ENCODE measurements at regions of chr16 and their contacts with region 1.

Region 1: GRCh38 chr16:15949210-15950160 is at the start of gene ABCC1:
- H3K4me3 Mint-ChIP-seq: peak within 1 kb of the TSS; percentile 94
- H3K27ac Mint-ChIP-seq: peak within 1 kb of the TSS; percentile 84
- H3K4me1 Mint-ChIP-seq: peaks cover 43% of the 10 kb centered on the region
- H3K27me3 Mint-ChIP-seq: no peaks in the 10 kb centered on the region

Region 2: GRCh38 chr16:15888072-15888976 is 61.2 kb before region 1 on chr16 and contains the start of gene CEP20:
- intact Hi-C with region 1: loop called (anchors 5 kb)
- H3K4me3 Mint-ChIP-seq: peak within 1 kb of the TSS; percentile 98
- H3K27ac Mint-ChIP-seq: peak within 1 kb of the TSS; percentile 94
- H3K4me1 Mint-ChIP-seq: peaks cover 22% of the 10 kb centered on the region
- H3K27me3 Mint-ChIP-seq: no peaks in the 10 kb centered on the region

Region 3: GRCh38 chr16:15988268-15989013 is 39.0 kb after region 1 on chr16:
- intact Hi-C with region 1: loop called (anchors 5 kb)
- H3K4me3 Mint-ChIP-seq: no peak overlapping the region
- H3K27ac Mint-ChIP-seq: peak overlapping the region; percentile 48
- H3K4me1 Mint-ChIP-seq: peaks cover 49% of the 10 kb centered on the region
- H3K27me3 Mint-ChIP-seq: no peaks in the 10 kb centered on the region

Measured in dendritic cell treated with granulocyte-macrophage colony-stimulating factor and Interleukin-4, amounts not matched to agents 40 ng/mL and 50 ng/mL, for 4 days (primary cell).